CD4-positive, alpha-beta T cell (primary cell): ENCODE measurements at regions of chr1 and their contacts with region 1.

Region 1: GRCh38 chr1:159089184-159089791 is 12.7 kb upstream of the AIM2 start:
- DNase-seq: peak in 4 of 14 experiments; percentile 32 to 70 (median 60)
- ATAC-seq: peak; percentile 51
- H3K4me3 ChIP-seq: no peak overlapping the region
- H3K4me3 Mint-ChIP-seq: no peak overlapping the region
- H3K27ac ChIP-seq: no peak overlapping the region
- H3K27ac Mint-ChIP-seq: no peak overlapping the region
- H3K4me1 ChIP-seq: peaks cover 6% of the 10 kb centered on the region
- H3K4me1 Mint-ChIP-seq: no peaks in the 10 kb centered on the region
- H3K27me3 ChIP-seq: no peaks in the 10 kb centered on the region
- H3K27me3 Mint-ChIP-seq: peaks cover 4% of the 10 kb centered on the region
- CTCF ChIP-seq: peak; percentile 75

Region 2: DNA sequence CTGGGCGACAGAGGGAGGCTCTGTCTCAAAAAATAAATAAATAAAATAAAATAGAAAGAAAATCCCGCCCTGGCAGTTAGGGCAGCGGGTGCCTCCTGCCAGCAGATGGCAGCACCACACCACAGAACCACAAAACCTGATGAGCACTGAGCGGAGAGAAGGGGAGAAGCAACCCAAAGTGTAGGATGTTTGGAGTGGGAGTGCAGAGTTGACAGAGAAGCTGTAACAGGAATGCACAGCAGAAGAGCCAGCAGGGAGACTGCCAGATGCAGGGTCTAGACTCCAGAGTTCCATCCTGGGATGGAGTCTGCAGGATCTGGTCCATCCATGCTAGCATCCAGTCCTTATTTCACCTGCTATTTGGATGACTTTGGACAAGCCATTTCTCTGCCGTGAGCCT is 1125.6 kb before region 1 on chr1:
- CTCF ChIA-PET with region 1: no interaction called
- POLR2A ChIA-PET with region 1: no interaction called
- intact Hi-C with region 1: loop called (anchors 2 to 5 kb)
- DNase-seq: peak; percentile 8 to 67 (median 34)
- ATAC-seq: no peak
- H3K4me3 ChIP-seq: no peak overlapping the region
- H3K4me3 Mint-ChIP-seq: no peak overlapping the region
- H3K27ac ChIP-seq: no peak overlapping the region
- H3K27ac Mint-ChIP-seq: no peak overlapping the region
- H3K4me1 ChIP-seq: no peaks in the 10 kb centered on the region
- H3K4me1 Mint-ChIP-seq: no peaks in the 10 kb centered on the region
- H3K27me3 ChIP-seq: peaks cover 0 to 8% of the 10 kb centered on the region in 2 experiments
- H3K27me3 Mint-ChIP-seq: peaks cover 46% of the 10 kb centered on the region
- CTCF ChIP-seq: peak; percentile 75

Region 3: DNA sequence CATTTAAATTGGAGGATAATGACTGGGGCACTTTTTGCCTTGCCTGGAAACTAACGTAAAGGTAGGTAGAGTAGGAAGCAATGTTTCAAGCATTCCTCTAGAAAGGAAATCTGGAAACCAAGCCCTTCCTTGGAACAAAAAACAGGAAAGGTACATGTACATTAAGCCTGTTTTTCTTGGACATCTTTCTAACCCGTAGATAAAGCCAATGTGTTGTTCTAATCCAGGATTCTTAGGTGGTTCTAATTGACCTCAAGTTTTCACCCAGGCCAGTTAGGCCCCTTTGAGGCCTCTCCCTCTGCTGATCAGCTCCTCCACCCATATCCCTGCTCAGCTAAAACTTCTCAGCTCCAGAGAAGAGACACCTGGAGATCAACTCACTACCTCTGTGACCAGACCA is 685.2 kb after region 1 on chr1:
- CTCF ChIA-PET with region 1: no interaction called
- POLR2A ChIA-PET with region 1: no interaction called
- intact Hi-C with region 1: no loop called
- DNase-seq: no peak
- ATAC-seq: no peak
- H3K4me3 ChIP-seq: no peak overlapping the region
- H3K4me3 Mint-ChIP-seq: no peak overlapping the region
- H3K27ac ChIP-seq: no peak overlapping the region
- H3K27ac Mint-ChIP-seq: no peak overlapping the region
- H3K4me1 ChIP-seq: peaks cover under 1% of the 10 kb centered on the region
- H3K4me1 Mint-ChIP-seq: peaks cover 5% of the 10 kb centered on the region
- H3K27me3 ChIP-seq: peaks cover 0 to 3% of the 10 kb centered on the region in 2 experiments
- H3K27me3 Mint-ChIP-seq: peaks cover 13% of the 10 kb centered on the region
- CTCF ChIP-seq: no peak